ENCODE measurements at regions of chr14 and their contacts with region 1.

Region 1: DNA sequence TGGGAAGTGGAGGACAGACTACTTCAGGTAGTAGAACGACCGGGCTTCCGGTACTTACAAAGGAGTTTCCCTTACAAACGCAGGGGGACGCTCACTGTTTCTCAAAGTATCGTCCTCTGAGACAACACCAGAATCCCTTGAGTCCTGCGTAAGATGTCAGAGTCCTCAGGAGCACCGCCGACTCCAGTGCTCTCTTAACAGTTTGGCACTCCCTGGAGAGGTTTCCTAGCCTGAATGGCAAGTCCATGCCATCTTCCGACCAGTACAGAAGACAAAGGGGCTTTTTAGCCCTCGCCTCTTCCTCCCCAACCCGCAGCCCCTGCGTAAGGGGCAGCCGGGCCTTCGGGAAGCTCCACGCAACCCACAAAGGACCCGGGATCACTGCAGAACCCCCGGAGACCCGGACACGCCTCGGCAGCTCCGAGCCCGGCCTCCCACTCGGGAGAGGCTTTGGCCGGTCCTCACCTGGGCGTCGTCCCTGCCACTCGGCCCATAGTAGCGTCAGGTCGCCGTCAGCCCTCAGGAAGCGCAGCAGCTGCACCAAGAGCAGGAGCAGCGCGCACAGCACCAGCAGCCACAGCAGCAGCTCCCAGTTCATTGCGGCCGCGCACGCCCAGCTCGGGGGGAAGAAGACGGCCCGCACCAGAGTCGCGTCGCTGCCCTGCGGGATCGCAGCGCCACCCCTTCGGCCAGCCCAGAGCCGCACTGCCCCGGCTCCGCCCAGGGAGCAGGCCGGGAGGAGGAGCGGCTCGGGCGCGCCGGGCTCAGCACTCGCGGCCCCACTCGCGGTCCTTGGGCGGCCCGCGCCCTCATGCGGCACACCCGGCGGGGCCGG is at the start of gene DHRS7:
- DNase-seq: peak; percentile 73 to 90
- H3K4me3 ChIP-seq: peak within 1 kb of the TSS; percentile 87
- H3K27ac ChIP-seq: peak within 1 kb of the TSS; percentile 69
- H3K4me1 ChIP-seq: peaks cover 38% of the 10 kb centered on the region
- H3K27me3 ChIP-seq: no peaks in the 10 kb centered on the region
- CTCF ChIP-seq: no peak; the same call in 1 of the 2 replicates
- total RNA-seq, gene DHRS7: 55.1 and 81.0 TPM in 2 replicates

Region 2: GRCh38 chr14:59787045-59787674 is 377.8 kb before region 1 on chr14:
- CTCF ChIA-PET with region 1: no interaction called
- POLR2A ChIA-PET with region 1: no interaction called
- intact Hi-C with region 1: no loop called
- DNase-seq: no peak
- H3K4me3 ChIP-seq: no peak overlapping the region
- H3K27ac ChIP-seq: no peak overlapping the region
- H3K4me1 ChIP-seq: no peaks in the 10 kb centered on the region
- H3K27me3 ChIP-seq: no peaks in the 10 kb centered on the region
- CTCF ChIP-seq: no peak

Region 3: DNA sequence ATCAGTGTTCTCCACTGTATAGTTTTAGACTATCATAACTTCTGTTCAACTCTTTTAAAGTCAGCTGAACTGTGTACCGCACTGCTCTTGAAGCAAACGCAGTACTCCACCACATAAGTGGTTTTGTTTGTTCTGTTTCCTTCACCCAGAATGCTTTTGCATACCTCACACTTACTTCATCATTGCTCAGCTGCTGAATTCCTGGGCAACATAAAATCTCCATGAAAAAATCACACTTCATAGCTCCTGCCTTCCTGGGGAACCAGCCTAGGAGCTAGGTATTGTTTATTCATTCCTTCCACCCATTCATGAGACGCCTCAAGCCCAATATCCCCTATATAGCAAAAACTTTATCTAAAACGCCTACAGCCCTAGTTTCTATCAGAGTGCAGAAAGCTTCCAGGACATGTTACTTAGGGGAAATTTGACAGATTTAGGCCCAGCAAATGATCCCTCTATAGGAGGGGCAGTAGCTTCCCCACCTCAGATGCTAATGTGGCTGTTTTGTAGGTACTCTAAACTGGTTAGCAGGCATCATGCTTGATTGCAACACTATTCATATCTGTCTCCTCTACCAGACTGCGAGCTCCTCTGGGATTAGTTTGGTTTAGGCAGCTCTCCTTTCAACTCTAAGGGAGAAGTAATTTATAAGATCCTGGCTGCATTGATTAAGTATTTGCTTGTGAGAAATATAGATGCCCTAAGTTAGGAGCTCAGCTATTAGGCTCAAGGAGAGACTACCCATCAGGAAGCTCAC is 200.5 kb before region 1 on chr14:
- CTCF ChIA-PET with region 1: no interaction called
- POLR2A ChIA-PET with region 1: no interaction called
- intact Hi-C with region 1: loop called (anchors 2 kb)
- DNase-seq: no peak
- H3K4me3 ChIP-seq: no peak overlapping the region
- H3K27ac ChIP-seq: no peak overlapping the region
- H3K4me1 ChIP-seq: no peaks in the 10 kb centered on the region
- H3K27me3 ChIP-seq: no peaks in the 10 kb centered on the region
- CTCF ChIP-seq: no peak

Region 4: DNA sequence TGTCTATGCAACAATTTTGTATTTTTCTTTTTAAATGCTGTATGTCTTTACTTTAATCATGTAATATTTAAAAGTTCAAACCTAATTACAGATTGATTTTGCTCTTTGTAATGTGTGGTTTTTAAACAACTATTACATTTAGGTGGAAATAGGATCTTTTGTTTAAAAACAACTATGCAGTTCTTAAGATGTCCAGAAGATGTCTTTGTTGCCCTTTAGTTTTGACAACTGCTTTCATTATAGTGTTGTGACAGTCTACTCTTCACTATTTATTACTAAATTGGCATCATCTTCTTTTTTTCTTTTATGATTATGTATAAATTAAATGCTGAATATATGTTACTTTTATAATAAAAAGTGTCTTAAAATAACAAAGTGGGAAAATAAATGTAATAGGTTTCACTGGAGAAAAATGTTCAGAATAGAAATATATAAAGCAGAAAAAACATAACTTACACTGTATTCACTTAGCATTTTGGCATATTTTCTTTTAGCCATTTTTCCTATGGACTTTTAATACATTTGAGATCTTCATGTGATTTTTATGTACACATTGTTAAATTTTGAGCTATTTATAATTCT is 100.3 kb before region 1 on chr14:
- CTCF ChIA-PET with region 1: interaction called, 5 read pairs
- POLR2A ChIA-PET with region 1: interaction called, 6 read pairs
- intact Hi-C with region 1: loop called (anchors 1 kb)
- DNase-seq: no peak
- H3K4me3 ChIP-seq: no peak overlapping the region
- H3K27ac ChIP-seq: no peak overlapping the region
- H3K4me1 ChIP-seq: peaks cover 18% of the 10 kb centered on the region
- H3K27me3 ChIP-seq: no peaks in the 10 kb centered on the region
- CTCF ChIP-seq: peak; percentile 75

Region 5: GRCh38 chr14:60091550-60092530 is 73.1 kb before region 1 on chr14 and contains the start of gene PCNX4:
- CTCF ChIA-PET with region 1: no interaction called
- POLR2A ChIA-PET with region 1: no interaction called
- intact Hi-C with region 1: loop called (anchors 1 kb)
- DNase-seq: peak; percentile 96
- H3K4me3 ChIP-seq: peak within 1 kb of the TSS; percentile 90
- H3K27ac ChIP-seq: peak within 1 kb of the TSS; percentile 94
- H3K4me1 ChIP-seq: peaks cover 20% of the 10 kb centered on the region
- H3K27me3 ChIP-seq: no peaks in the 10 kb centered on the region
- CTCF ChIP-seq: no peak
- total RNA-seq, gene PCNX4: 58.3 and 65.1 TPM in 2 replicates

Region 6: GRCh38 chr14:60151715-60152114 is 13.2 kb before region 1 on chr14:
- CTCF ChIA-PET with region 1: interaction called, 16 read pairs
- POLR2A ChIA-PET with region 1: no interaction called
- intact Hi-C with region 1: no loop called
- DNase-seq: peak; percentile 70 to 77
- H3K4me3 ChIP-seq: no peak overlapping the region
- H3K27ac ChIP-seq: peak overlapping the region; percentile 57
- H3K4me1 ChIP-seq: peaks cover 21% of the 10 kb centered on the region
- H3K27me3 ChIP-seq: no peaks in the 10 kb centered on the region
- CTCF ChIP-seq: no peak

Measured in PC-9 (cell line).